ENCODE measurements at regions of chr9 and their contacts with region 1.

Region 1: DNA sequence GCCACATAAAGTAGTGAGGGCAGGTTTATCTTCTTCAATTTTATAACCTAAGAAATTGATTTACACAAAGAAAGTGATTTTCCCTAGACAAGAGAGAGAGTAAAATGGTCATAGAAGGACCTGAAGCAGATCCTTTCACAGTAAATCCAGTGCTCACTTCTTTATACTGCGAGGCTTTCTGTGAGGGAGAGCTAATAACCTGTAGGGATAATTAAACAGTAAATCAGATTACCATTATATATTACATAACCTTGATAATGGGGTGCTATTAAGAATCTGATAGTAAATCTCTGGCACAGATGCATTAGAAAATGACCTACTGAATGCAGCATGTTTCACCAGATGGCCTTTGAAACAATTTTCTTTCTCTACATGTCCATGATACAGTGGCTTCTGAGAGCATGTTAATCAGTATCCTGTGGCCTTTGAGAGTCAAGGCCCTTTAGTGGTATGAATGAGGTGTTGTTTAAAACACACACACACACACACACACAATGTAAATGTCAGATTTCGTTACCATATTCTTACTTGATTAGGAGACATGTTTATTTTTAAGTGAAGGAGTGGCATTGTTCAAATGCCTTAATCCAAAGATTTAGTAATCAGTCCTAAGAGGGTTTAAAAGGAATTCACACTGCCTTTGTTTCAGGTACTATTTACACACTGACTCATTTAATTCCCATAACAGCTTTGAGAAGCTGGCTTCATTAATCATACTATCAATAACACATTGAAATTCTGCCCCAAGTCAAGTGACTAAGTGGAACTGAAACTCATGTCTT is 124.7 kb downstream of the ALDH1A1 start:
- H3K4me3 Mint-ChIP-seq: no peak overlapping the region
- H3K27ac Mint-ChIP-seq: no peak overlapping the region
- H3K4me1 Mint-ChIP-seq: peaks cover 11% of the 10 kb centered on the region
- H3K27me3 Mint-ChIP-seq: no peaks in the 10 kb centered on the region

Region 2: DNA sequence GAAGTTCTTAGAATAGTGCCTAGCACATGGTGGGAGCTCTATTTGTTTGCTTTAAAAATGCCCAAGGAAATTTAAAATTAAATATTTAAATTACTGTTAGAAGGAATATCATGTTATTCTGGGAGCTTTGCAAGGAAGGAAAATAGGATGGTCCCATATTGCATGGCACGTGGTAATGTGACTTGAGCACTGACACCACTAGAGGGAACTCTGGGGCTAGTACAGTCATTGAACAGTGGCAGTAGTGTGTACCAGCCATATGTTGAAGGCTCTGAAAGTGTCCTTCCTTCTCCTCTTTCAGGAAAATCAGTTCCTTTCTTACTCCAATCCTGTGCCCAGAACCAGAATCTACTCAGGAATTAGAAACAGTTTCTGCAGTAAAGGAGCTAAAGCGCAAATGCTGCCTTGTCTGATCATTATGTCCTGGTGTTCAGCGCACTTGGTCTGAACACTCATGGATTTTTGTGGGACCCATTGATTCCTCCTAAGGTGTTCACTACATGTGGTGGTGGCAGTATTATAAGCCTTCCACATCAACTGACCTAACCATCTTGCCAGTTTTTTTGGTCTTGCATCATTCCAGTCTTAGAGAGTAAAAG is 624.8 kb before region 1 on chr9:
- intact Hi-C with region 1: loop called (anchors 10 kb)
- H3K4me3 Mint-ChIP-seq: no peak overlapping the region
- H3K27ac Mint-ChIP-seq: no peak overlapping the region
- H3K4me1 Mint-ChIP-seq: no peaks in the 10 kb centered on the region
- H3K27me3 Mint-ChIP-seq: peaks cover 10% of the 10 kb centered on the region

Region 3: GRCh38 chr9:72280913-72281500 is 547.1 kb before region 1 on chr9:
- intact Hi-C with region 1: loop called (anchors 2 kb)
- H3K4me3 Mint-ChIP-seq: no peak overlapping the region
- H3K27ac Mint-ChIP-seq: no peak overlapping the region
- H3K4me1 Mint-ChIP-seq: peaks cover 6% of the 10 kb centered on the region
- H3K27me3 Mint-ChIP-seq: no peaks in the 10 kb centered on the region

Measured in dendritic cell treated with granulocyte-macrophage colony-stimulating factor and Interleukin-4, amounts not matched to agents 40 ng/mL and 50 ng/mL, for 4 days (primary cell).